Head of caudate nucleus (tissue), 42 donors: ENCODE measurements at regions of chr17 and their contacts with region 1.

Region 1: GRCh38 chr17:10875979-10876555 is 38.2 kb upstream of the PIRT start:
- DNase-seq: peak; percentile 25 to 86 (median 66)

Region 2: DNA sequence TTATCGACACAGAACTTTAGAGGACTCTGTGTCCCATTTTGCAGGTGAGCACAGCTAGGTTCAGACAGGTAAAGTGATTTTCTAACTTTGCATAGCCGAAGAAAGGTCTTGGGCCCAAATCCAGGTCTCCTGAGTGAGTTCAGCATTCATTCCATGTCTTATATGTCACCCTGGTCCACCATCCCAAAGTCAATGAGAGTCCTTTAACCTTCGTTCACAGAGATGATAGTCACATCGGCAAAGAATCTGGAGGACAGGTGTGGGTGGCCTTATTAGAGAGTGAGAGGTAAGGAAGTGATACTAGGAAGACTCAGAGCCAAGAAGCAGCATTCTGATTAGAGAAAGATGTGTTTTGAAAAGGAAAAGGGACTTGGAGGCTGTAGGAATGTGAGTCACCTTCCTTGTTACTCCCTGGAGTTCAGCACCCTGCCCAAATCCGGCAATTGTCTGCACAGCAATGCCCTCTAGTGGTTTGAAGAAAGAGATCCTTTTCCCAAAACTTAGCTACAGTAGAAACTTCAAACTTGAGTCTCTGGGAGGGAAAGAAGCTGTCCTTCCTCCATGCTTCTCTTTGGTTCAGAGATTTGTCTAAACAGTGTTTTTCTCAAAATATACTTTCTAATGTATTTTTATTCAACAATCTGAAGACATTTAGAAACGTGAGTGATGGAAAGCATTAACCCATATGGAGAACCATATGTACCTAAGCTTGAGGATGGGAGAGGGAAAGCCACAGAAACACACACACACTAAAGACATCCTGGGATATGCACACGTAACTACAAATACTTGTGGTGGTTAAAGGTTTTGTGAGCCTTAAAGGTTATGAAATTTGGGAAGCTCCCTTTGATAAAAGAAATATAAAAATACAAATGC is 268.5 kb after region 1 on chr17:
- intact Hi-C with region 1: loop called (anchors 5 kb)
- DNase-seq: peak; percentile 6 to 86 (median 61)

Region 3: GRCh38 chr17:11644261-11645212 is 768.5 kb after region 1 on chr17:
- intact Hi-C with region 1: loop called (anchors 5 kb)
- DNase-seq: peak; percentile 19 to 92 (median 77)